Gastrocnemius medialis (tissue), 4 donors: ENCODE measurements at regions of chr13 and their contacts with region 1.

Region 1: GRCh38 chr13:110561344-110562035 is at the start of gene RAB20:
- DNase-seq: peak; percentile 73 to 75
- ATAC-seq: peak; percentile 79 to 85
- H3K4me3 ChIP-seq: peak within 1 kb of the TSS; percentile 75 to 88 (median 84)
- H3K27ac ChIP-seq: peak within 1 kb of the TSS; percentile 75 to 92 (median 84)
- H3K4me1 ChIP-seq: peaks cover 10 to 13% of the 10 kb centered on the region in 2 donors
- H3K27me3 ChIP-seq: no peaks in the 10 kb centered on the region
- CTCF ChIP-seq: no peak
- POLR2A ChIP-seq: peak; percentile 66 to 72
- total RNA-seq, gene RAB20: 0.31 to 9.1 (median 2.0) TPM

Region 2: DNA sequence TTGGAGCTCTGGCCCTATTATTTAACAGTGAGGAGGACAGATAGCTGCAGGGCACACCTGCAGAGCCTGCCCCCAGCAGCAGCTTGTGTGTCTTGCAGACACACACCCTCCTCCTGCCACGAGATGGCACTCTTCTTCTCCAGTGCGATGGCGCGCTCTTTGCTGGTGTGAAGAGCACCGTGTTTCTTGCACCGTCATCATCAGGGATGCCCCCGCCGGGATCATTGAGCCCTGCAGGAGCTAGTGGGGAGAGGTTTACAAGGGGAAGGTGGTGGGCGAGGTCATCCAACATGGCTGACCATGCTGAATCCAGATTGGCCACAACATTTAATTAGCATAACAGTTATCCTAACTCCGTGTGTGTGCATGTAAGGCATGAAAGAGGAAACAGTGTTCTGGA is 105.5 kb before region 1 on chr13:
- in situ Hi-C with region 1: loop called in 1 of 4 experiments (anchors 25 kb)
- intact Hi-C with region 1: loop called (anchors 1 kb)
- DNase-seq: peak; percentile 54 to 74
- ATAC-seq: peak; percentile 82 to 96
- H3K4me3 ChIP-seq: peak overlapping the region in 1 of 4 donors; percentile 27
- H3K27ac ChIP-seq: no peak overlapping the region
- H3K4me1 ChIP-seq: no peaks in the 10 kb centered on the region
- H3K27me3 ChIP-seq: no peaks in the 10 kb centered on the region
- CTCF ChIP-seq: peak; percentile 69 to 82 (median 74)
- POLR2A ChIP-seq: no peak

Region 3: DNA sequence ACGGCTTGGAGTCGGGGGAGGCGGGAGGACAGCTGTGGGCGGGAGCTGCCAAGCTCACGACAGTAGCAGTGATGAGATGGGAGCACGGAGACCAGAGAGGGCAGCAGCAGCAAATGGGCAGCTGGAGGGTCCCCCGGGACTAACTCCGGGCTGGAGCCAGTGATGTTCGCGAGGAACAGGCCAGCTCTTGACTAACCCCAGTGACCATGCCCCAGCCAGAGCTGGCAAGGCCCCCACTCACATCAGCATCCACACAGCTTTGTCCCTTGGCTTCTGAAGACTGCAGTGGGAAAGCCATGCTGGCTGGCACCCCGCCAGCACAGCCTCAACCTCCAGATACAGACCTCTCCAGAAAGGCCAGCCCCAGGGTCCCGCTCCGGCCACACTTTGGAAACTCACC is 81.8 kb before region 1 on chr13:
- in situ Hi-C with region 1: loop called in 1 of 4 experiments (anchors 25 kb)
- intact Hi-C with region 1: loop called (anchors 5 kb)
- DNase-seq: peak in 1 of 2 donors; percentile 41
- ATAC-seq: peak; percentile 16 to 45
- H3K4me3 ChIP-seq: no peak overlapping the region
- H3K27ac ChIP-seq: peak overlapping the region; percentile 24 to 57 (median 33)
- H3K4me1 ChIP-seq: peaks cover 0 to 7% of the 10 kb centered on the region in 2 donors
- H3K27me3 ChIP-seq: no peaks in the 10 kb centered on the region
- CTCF ChIP-seq: no peak
- POLR2A ChIP-seq: no peak

Region 4: GRCh38 chr13:110615322-110616102 is 54.0 kb after region 1 on chr13 and contains the start of gene NAXD:
- in situ Hi-C with region 1: no loop called
- intact Hi-C with region 1: loop called (anchors 1 kb)
- DNase-seq: peak; percentile 89 to 94
- ATAC-seq: peak; percentile 90 to 92
- H3K4me3 ChIP-seq: peak within 1 kb of the TSS; percentile 68 to 95 (median 81)
- H3K27ac ChIP-seq: peak within 1 kb of the TSS; percentile 80 to 93 (median 90)
- H3K4me1 ChIP-seq: peaks cover 22 to 31% of the 10 kb centered on the region in 2 donors
- H3K27me3 ChIP-seq: peaks cover 2 to 4% (median 2%) of the 10 kb centered on the region in 3 donors
- CTCF ChIP-seq: no peak
- POLR2A ChIP-seq: peak; percentile 83 to 85
- total RNA-seq, gene NAXD: 17.9 to 24.7 (median 21.5) TPM

Region 5: DNA sequence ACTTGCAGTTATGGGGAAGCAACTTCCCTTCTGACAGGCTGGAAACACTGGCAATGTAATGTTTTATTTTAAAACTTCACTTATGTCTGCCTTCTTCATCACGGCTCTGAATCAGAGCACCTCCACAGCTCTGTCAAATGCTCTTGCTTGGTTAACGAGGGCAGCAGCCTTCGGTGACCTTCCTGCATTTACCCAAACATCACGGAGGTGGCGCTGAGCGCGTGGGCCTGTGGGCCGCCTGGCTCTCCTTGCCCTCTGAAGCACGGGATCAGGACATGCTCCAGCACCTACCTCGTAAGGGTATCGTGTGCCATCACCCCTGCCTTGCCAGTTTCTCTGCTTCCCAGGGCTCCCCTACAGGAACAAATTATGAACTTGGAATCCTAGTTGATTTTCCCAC is 1068.9 kb after region 1 on chr13:
- in situ Hi-C with region 1: no loop called
- intact Hi-C with region 1: no loop called
- DNase-seq: no peak
- ATAC-seq: no peak
- H3K4me3 ChIP-seq: no peak overlapping the region
- H3K27ac ChIP-seq: no peak overlapping the region
- H3K4me1 ChIP-seq: no peaks in the 10 kb centered on the region
- H3K27me3 ChIP-seq: no peaks in the 10 kb centered on the region
- CTCF ChIP-seq: no peak
- POLR2A ChIP-seq: no peak